Aorta (tissue), 5 donors: ENCODE measurements at regions of chr9 and their contacts with region 1.

Region 1: GRCh38 chr9:6353851-6354686 is 25.9 kb downstream of the TPD52L3 start:
- DNase-seq: no peak
- ATAC-seq: peak; percentile 83
- H3K4me3 ChIP-seq: no peak overlapping the region
- H3K27ac ChIP-seq: no peak overlapping the region
- H3K4me1 ChIP-seq: no peaks in the 10 kb centered on the region
- H3K27me3 ChIP-seq: no peaks in the 10 kb centered on the region

Region 2: DNA sequence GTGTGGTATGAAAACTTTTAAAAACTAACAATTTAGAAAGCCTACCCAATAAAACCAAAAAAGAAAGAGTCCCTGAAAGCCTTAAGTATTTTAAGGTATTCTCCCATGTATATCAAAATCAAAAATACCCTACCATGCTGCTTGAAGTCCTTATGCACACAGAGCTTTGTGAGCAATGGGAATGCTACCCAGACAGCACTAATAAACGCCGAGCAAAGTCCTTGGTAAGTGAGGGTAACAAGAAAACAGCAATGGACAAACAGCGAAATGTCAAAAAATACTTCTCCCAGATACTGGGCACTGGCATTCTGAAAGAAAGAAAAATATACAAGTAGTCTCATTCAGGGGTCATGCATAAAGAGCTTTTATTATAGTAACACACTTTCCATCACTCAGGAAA is 548.6 kb before region 1 on chr9:
- intact Hi-C with region 1: no loop called
- DNase-seq: no peak
- ATAC-seq: no peak
- H3K4me3 ChIP-seq: no peak overlapping the region
- H3K27ac ChIP-seq: no peak overlapping the region
- H3K4me1 ChIP-seq: peaks cover 0 to 4% of the 10 kb centered on the region in 2 donors
- H3K27me3 ChIP-seq: no peaks in the 10 kb centered on the region

Region 3: GRCh38 chr9:6506571-6506970 is 152.5 kb after region 1 on chr9:
- intact Hi-C with region 1: loop called in 1 of 2 experiments (anchors 10 kb)
- DNase-seq: no peak
- ATAC-seq: no peak
- H3K4me3 ChIP-seq: no peak overlapping the region
- H3K27ac ChIP-seq: no peak overlapping the region
- H3K4me1 ChIP-seq: no peaks in the 10 kb centered on the region
- H3K27me3 ChIP-seq: no peaks in the 10 kb centered on the region

Region 4: GRCh38 chr9:6566409-6567139 is 212.5 kb after region 1 on chr9:
- intact Hi-C with region 1: loop called (anchors 1 to 2 kb)
- DNase-seq: peak; percentile 76 to 82
- ATAC-seq: peak; percentile 68
- H3K4me3 ChIP-seq: no peak overlapping the region
- H3K27ac ChIP-seq: no peak overlapping the region
- H3K4me1 ChIP-seq: peaks cover 2 to 3% of the 10 kb centered on the region in 2 donors
- H3K27me3 ChIP-seq: no peaks in the 10 kb centered on the region

Region 5: GRCh38 chr9:6667633-6668280 is 313.7 kb after region 1 on chr9:
- intact Hi-C with region 1: loop called in 1 of 2 experiments (anchors 10 kb)
- DNase-seq: no peak
- ATAC-seq: no peak
- H3K4me3 ChIP-seq: no peak overlapping the region
- H3K27ac ChIP-seq: no peak overlapping the region
- H3K4me1 ChIP-seq: no peaks in the 10 kb centered on the region
- H3K27me3 ChIP-seq: no peaks in the 10 kb centered on the region

Region 6: DNA sequence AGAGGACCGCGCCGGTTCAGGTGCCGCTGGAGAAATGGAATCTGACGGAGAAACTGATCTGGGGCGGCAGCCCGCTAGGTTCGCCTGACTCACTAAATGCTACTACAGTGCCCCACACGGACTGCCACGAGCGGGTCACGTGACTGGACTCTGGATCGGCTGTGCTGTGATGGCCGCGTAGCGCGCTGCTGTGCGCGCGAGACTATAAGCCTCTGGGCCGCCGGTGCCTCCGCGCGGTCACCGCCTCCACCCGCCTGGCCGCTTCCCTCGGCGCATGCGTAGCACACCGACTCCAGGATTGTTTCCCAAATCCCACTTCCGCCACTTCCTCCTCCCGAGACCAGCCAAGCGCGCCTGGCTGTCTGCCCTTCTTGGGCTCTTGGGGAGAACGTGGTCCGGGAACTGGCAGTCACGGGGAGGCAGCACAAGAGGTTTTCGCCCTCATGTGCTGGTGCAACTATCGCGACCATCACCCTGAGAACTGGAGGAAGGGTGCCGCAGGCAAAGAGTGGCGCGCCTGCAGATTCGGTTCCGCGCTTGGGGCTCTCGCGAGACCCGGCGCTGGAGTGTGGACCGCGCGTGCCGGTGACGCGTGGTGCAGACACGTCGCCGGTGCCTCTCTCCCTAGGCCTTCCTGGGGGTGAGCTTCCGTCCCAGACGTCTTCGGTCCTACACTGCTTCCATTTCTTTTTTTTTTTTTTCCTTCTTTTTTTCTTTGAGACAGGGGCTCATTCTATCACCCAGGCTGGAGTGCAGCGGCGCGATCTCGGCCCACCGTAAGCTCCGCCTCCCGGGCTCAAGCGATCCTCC is 327.3 kb after region 1 on chr9:
- intact Hi-C with region 1: loop called in 1 of 2 experiments (anchors 10 kb)
- DNase-seq: peak; percentile 98 to 99
- ATAC-seq: peak; percentile 99
- H3K4me3 ChIP-seq: peak overlapping the region; percentile 49 to 72
- H3K27ac ChIP-seq: peak overlapping the region; percentile 88 to 95
- H3K4me1 ChIP-seq: no peaks in the 10 kb centered on the region
- H3K27me3 ChIP-seq: no peaks in the 10 kb centered on the region